ENCODE measurements at regions of chr2 and their contacts with region 1.

Region 1: DNA sequence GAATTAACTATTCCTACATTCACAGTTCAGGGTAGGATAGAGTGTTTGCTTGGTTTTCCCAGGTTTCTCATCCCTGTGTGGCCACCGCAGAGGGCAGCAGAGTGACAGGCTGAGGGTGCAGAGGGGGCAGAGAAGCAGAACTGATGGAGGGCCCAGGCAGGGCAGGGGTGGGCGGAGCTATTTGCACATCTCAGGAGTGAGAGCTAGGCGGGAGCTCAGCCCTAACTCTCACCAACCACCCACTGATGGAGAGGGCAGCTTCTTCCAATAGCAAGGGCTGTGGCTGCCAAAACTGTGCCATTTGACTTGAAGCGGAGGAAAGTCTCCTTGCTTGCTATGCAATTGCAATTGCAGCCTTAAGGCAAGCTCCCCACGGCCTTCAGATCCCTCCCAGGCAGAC is 12.0 kb upstream of the DARS1 start:
- DNase-seq: no peak
- H3K4me3 Mint-ChIP-seq: no peak overlapping the region
- H3K27ac Mint-ChIP-seq: no peak overlapping the region
- H3K4me1 Mint-ChIP-seq: peaks cover 30% of the 10 kb centered on the region
- H3K27me3 Mint-ChIP-seq: no peaks in the 10 kb centered on the region

Region 2: DNA sequence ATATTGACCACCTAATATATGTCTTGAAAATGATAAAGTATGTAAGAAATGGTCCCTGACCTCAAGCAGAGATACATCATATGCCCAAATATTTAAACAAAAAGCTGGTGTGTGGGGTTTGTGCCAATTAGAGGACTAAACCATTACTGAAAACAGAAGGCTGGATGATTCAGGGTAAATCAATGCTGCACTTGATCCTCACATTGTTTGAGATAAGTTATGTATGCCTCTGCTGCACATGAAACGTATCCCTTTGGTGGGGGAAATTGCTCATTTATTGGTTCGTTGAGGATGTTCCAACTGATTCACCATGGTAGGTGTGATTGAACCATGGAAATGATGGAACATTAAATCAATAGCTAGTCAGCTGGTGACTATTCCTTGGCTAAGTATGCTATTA is 12.7 kb after region 1 on chr2:
- CTCF ChIA-PET with region 1: interaction called, 10 read pairs
- POLR2A ChIA-PET with region 1: no interaction called
- DNase-seq: no peak
- H3K4me3 Mint-ChIP-seq: no peak overlapping the region
- H3K27ac Mint-ChIP-seq: no peak overlapping the region
- H3K4me1 Mint-ChIP-seq: peaks cover 49% of the 10 kb centered on the region
- H3K27me3 Mint-ChIP-seq: no peaks in the 10 kb centered on the region

Region 3: DNA sequence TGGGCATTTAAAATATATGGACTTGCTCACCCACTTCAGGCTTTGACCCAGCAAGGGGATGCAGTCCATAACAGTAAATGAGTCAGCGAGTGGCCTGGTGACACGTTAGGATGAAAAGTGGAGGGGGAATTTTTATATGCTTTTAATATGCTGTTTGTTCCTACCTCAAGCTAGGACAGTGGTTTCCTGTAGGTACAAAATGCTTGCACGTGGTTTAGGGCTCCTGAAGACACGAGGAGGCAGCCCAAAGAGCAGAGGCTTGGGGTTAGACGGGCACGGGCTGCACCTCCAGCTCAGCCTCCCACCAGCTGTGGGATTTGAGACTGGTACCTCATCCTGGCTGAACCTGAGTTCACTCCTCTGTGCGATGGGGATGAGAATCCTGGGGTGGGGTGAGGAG is 426.7 kb after region 1 on chr2:
- CTCF ChIA-PET with region 1: no interaction called
- POLR2A ChIA-PET with region 1: no interaction called
- DNase-seq: peak; percentile 16
- H3K4me3 Mint-ChIP-seq: peak overlapping the region; percentile 69
- H3K27ac Mint-ChIP-seq: peak overlapping the region; percentile 62
- H3K4me1 Mint-ChIP-seq: peaks cover 25% of the 10 kb centered on the region
- H3K27me3 Mint-ChIP-seq: peaks cover 52% of the 10 kb centered on the region